B cell (primary cell): ENCODE measurements at regions of chr1 and their contacts with region 1.

Region 1: DNA sequence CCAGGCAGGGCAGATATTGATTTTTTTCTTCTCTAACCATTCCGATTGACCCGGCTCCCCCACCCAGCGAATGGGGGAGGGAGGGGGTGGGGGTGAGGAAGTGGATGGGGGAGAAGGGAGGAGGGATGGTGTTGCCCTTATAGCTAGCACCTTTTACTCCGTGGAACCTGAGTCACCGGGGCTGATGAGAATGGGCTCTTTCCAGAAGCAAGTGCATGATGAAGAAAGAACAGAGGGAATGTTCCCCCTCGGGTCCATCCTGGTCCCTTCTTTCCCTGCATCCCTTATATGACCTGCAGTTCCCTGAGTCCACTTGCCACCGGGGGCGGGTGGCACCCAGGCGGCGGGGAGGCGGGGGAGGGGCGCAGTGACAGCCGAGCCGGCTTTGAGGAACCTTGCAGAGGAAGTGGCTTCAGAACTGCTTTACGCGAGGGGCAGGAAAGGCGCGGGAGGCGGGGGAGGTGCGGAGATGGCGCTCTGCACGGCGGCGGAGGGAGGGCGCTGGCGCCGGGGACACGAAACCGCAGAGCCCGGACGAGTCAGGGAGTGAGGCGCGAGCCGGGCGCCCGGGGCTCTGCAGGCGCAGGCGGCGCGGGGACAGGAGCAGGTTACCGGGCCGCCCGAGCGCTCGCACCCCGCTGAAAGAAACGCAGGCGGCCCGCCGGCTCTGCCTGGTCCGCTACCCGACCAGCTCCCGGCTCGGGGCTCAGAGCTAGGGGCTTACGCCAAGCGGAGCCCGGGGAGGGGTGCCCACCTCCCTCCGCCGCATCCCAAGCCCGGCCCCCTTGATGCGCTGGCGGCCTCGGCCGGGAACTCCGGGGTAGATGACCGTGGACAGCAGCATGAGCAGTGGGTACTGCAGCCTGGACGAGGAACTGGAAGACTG is 49.7 kb downstream of the RASSF5 start:
- DNase-seq: peak; percentile 89
- ATAC-seq: peak; percentile 79
- H3K4me3 ChIP-seq: peak overlapping the region; percentile 85 to 100 (median 97)
- H3K4me3 Mint-ChIP-seq: peak overlapping the region; percentile 99
- H3K27ac ChIP-seq: peak overlapping the region; percentile 86 to 95
- H3K27ac Mint-ChIP-seq: peak overlapping the region; percentile 99
- H3K4me1 ChIP-seq: peaks cover 46 to 69% of the 10 kb centered on the region in 2 donors
- H3K4me1 Mint-ChIP-seq: peaks cover 67% of the 10 kb centered on the region
- H3K27me3 ChIP-seq: no peaks in the 10 kb centered on the region
- H3K27me3 Mint-ChIP-seq: no peaks in the 10 kb centered on the region
- CTCF ChIP-seq: no peak

Region 2: DNA sequence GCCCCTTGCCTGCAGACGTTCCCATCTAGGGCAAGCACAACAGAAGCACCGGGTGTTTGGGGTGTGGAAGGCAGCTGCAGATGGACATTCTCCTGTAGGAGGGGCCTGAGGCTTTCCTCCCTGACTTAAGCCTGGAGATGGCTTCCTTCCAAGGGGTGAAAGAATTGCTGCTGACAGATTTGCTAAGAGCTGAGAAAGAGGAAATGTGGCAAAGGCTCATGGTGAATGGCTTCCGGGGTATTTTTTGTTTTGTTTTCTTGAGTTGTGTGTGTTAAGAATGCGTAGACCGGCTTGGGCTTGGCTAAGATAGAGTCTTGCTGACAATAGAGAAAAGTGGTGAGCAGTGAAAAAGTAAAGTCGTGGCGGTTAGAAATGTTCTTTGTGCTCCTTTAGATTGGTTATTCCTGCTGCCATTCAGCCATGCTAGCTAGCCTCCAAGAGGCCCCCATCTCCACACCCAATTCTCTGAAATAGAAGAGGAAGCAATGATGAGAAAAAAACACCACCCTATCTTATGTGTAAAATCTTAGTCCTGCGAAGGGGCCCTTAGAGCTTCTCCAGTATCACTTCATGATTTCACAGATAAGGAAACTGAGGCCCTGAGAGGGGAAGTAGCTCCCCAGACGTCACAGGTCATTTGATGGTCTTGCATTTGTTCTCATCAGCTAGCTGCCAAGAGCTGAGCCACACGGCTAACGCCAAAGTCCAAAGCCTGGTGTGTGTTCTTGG is 18.3 kb after region 1 on chr1:
- CTCF ChIA-PET with region 1: interaction called, 1,018 read pairs
- POLR2A ChIA-PET with region 1: interaction called, 27 read pairs
- intact Hi-C with region 1: loop called (anchors 1 kb)
- DNase-seq: peak; percentile 84
- ATAC-seq: peak; percentile 38
- H3K4me3 ChIP-seq: peak overlapping the region; percentile 2 to 49 (median 26)
- H3K4me3 Mint-ChIP-seq: peak overlapping the region; percentile 86
- H3K27ac ChIP-seq: peak overlapping the region; percentile 86 to 96
- H3K27ac Mint-ChIP-seq: peak overlapping the region; percentile 98
- H3K4me1 ChIP-seq: peaks cover 80 to 89% of the 10 kb centered on the region in 2 donors
- H3K4me1 Mint-ChIP-seq: peaks cover 92% of the 10 kb centered on the region
- H3K27me3 ChIP-seq: no peaks in the 10 kb centered on the region
- H3K27me3 Mint-ChIP-seq: no peaks in the 10 kb centered on the region
- CTCF ChIP-seq: no peak

Region 3: DNA sequence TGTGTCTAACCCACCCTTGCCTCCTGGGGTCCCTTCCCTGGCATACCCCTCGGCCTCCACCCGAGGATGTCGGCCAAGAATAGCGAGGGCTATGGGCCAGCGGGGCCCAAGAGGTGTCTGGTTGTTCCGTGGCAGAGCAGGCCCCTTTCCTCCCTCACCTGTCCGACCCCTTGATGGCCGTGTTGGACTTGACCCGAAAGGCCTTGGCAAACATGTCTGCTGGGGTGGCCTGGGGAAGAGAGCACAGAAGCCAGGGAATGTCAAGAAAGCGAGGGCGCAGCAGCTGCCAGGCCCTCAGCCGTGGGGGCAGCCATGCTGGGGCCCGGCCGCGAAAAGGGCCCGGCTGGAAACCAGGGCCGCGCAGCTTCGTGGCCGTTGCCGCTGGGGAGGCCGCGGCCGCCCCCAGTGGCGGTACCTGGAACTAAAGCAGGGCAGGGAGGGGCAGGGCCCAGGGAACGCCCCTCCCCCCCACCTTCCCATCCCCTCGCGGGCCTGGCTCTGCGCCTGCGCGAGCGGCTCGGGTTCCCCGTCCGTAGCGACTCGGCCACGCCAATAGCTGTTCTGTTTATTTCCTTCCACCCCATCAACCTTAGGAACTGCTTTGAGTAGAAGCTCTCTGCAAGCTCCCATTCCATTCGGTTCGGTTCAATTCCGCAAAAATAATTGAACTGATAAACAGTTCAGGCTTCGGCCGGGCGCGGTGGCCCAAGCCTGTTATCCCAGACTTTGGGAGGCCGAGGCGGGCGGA is 55.3 kb after region 1 on chr1 and contains the start of gene EIF2D:
- CTCF ChIA-PET with region 1: interaction called, 4 read pairs
- POLR2A ChIA-PET with region 1: interaction called, 5 read pairs
- intact Hi-C with region 1: loop called (anchors 1 kb)
- DNase-seq: peak; percentile 96
- ATAC-seq: peak; percentile 100
- H3K4me3 ChIP-seq: peak within 1 kb of the TSS; percentile 61 to 87 (median 86)
- H3K4me3 Mint-ChIP-seq: peak within 1 kb of the TSS; percentile 93
- H3K27ac ChIP-seq: peak within 1 kb of the TSS; percentile 70 to 93
- H3K27ac Mint-ChIP-seq: peak within 1 kb of the TSS; percentile 96
- H3K4me1 ChIP-seq: peaks cover 8 to 12% of the 10 kb centered on the region in 2 donors
- H3K4me1 Mint-ChIP-seq: peaks cover 19% of the 10 kb centered on the region
- H3K27me3 ChIP-seq: no peaks in the 10 kb centered on the region
- H3K27me3 Mint-ChIP-seq: no peaks in the 10 kb centered on the region
- CTCF ChIP-seq: peak; percentile 88
- total RNA-seq, gene EIF2D: 60.6 and 62.2 TPM in 2 replicates

Region 4: GRCh38 chr1:206674745-206675175 is 117.8 kb after region 1 on chr1:
- CTCF ChIA-PET with region 1: no interaction called
- POLR2A ChIA-PET with region 1: no interaction called
- intact Hi-C with region 1: loop called (anchors 5 kb)
- DNase-seq: no peak
- ATAC-seq: no peak
- H3K4me3 ChIP-seq: no peak overlapping the region
- H3K4me3 Mint-ChIP-seq: no peak overlapping the region
- H3K27ac ChIP-seq: no peak overlapping the region
- H3K27ac Mint-ChIP-seq: peak overlapping the region; percentile 21
- H3K4me1 ChIP-seq: peaks cover 40 to 53% of the 10 kb centered on the region in 2 donors
- H3K4me1 Mint-ChIP-seq: peaks cover 31% of the 10 kb centered on the region
- H3K27me3 ChIP-seq: peaks cover 0 to 32% (median 6%) of the 10 kb centered on the region in 4 experiments
- H3K27me3 Mint-ChIP-seq: peaks cover 11% of the 10 kb centered on the region
- CTCF ChIP-seq: no peak

Region 5: DNA sequence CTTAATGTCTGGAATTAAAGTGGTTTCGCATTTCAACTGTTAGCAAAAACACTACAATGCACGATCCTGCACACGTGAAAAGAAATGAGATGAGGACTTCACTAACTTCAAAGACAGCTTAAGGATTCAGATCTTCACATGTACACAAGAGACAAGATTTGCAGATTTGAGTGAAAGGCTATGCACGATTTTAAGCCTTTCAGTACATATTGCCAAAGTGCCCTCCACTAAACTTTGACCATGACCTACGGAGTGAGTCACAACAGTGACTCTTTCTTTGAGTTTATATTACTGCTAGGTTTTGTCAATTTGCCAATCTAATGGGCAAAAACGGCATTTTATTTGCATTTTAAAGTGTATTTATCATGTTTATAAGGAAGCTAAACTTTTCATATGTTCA is 1046.8 kb after region 1 on chr1:
- CTCF ChIA-PET with region 1: no interaction called
- POLR2A ChIA-PET with region 1: no interaction called
- intact Hi-C with region 1: no loop called
- DNase-seq: no peak
- ATAC-seq: no peak
- H3K4me3 ChIP-seq: no peak overlapping the region
- H3K4me3 Mint-ChIP-seq: no peak overlapping the region
- H3K27ac ChIP-seq: no peak overlapping the region
- H3K27ac Mint-ChIP-seq: no peak overlapping the region
- H3K4me1 ChIP-seq: no peaks in the 10 kb centered on the region
- H3K4me1 Mint-ChIP-seq: no peaks in the 10 kb centered on the region
- H3K27me3 ChIP-seq: no peaks in the 10 kb centered on the region
- H3K27me3 Mint-ChIP-seq: no peaks in the 10 kb centered on the region
- CTCF ChIP-seq: no peak